ENCODE measurements at regions of chr2 and their contacts with region 1.

Region 1: GRCh38 chr2:213166109-213166508 is 14.7 kb upstream of the IKZF2 start:
- DNase-seq: no peak
- ATAC-seq: no peak
- H3K4me3 ChIP-seq: no peak overlapping the region
- H3K27ac ChIP-seq: no peak overlapping the region
- H3K4me1 ChIP-seq: no peaks in the 10 kb centered on the region
- H3K27me3 ChIP-seq: no peaks in the 10 kb centered on the region
- CTCF ChIP-seq: no peak
- POLR2A ChIP-seq: no peak

Region 2: DNA sequence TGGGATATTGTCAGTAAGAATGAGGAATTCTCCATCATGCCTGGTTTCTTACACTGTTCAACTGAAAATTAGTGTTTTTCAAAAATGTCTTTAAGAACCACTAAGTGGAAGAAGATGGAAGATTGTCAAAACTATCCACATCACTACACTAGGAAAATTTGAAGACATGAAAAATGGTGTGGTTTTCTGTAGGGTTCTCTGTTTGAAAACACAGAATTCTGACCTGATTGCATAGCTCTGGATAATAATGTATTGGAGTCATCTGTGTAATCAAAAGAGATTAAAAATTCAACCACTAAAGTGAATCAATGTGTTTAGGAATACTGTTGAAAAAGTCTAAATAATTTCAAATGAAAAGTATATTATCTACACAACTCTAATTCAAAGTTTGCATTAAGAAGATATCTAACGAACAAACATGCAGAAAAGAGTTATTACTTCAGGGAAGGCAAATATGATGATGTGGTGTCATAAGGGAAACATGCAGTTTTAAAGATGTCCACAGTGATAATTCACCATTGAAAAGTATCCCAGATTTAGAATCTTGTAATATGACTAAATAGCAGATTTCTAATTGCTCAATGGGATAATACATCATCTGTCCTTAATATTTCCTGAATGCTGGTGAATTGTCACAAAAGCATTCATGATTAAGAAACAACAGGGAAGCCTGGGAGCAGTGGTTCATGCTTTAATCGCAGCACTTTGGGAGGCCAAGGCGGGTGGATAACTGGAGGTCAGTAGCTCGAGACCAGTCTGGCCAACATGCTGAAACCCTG is 744.4 kb before region 1 on chr2:
- intact Hi-C with region 1: no loop called
- DNase-seq: no peak
- ATAC-seq: no peak
- H3K4me3 ChIP-seq: no peak overlapping the region
- H3K27ac ChIP-seq: no peak overlapping the region
- H3K4me1 ChIP-seq: peaks cover 0 to 3% (median 0%) of the 10 kb centered on the region in 12 donors
- H3K27me3 ChIP-seq: no peaks in the 10 kb centered on the region
- CTCF ChIP-seq: no peak
- POLR2A ChIP-seq: no peak

Region 3: DNA sequence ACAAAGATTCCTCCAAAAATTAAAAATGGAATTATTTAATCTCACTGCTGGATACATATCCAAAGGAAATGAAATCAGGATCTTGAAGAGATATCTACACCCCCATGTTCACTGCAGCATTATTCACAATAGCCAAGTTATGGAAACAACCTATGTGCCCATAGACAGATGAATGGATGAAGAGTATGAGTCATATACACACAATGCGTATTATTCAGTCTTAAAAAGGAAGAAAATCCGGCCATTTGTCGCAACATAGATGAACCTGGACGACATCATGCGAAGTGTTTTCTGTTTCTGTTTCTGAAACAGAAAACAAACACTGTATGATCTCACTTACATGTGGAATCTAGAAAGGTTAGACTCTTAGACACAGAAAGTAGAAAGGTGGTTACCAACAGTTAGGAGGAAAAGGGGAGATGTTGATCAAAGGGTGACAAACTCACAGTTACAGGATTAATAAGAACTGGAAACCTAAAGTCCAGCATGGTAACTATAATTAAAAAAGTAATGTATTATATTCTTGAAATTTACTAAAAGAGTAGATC is 539.7 kb before region 1 on chr2:
- intact Hi-C with region 1: no loop called
- DNase-seq: no peak
- ATAC-seq: no peak
- H3K4me3 ChIP-seq: no peak overlapping the region
- H3K27ac ChIP-seq: no peak overlapping the region
- H3K4me1 ChIP-seq: no peaks in the 10 kb centered on the region
- H3K27me3 ChIP-seq: no peaks in the 10 kb centered on the region
- CTCF ChIP-seq: no peak
- POLR2A ChIP-seq: no peak

Region 4: GRCh38 chr2:212770240-212770639 is 395.9 kb before region 1 on chr2:
- intact Hi-C with region 1: loop called in 1 of 10 experiments (anchors 5 kb)
- DNase-seq: no peak
- ATAC-seq: no peak
- H3K4me3 ChIP-seq: no peak overlapping the region
- H3K27ac ChIP-seq: no peak overlapping the region
- H3K4me1 ChIP-seq: no peaks in the 10 kb centered on the region
- H3K27me3 ChIP-seq: no peaks in the 10 kb centered on the region
- CTCF ChIP-seq: no peak
- POLR2A ChIP-seq: no peak

Region 5: GRCh38 chr2:213086571-213086970 is 79.5 kb before region 1 on chr2:
- intact Hi-C with region 1: no loop called
- DNase-seq: no peak
- ATAC-seq: peak; percentile 69 to 84 (median 78)
- H3K4me3 ChIP-seq: no peak overlapping the region
- H3K27ac ChIP-seq: peak overlapping the region in 9 of 12 donors; percentile 2 to 75 (median 45)
- H3K4me1 ChIP-seq: peaks cover 0 to 22% (median 0%) of the 10 kb centered on the region in 12 donors
- H3K27me3 ChIP-seq: no peaks in the 10 kb centered on the region
- CTCF ChIP-seq: no peak
- POLR2A ChIP-seq: no peak

Measured in heart left ventricle (tissue), 16 donors.